OCI-LY7 (cell line): ENCODE measurements at regions of chr5 and their contacts with region 1.

Region 1: GRCh38 chr5:5752844-5753243 is 330.4 kb downstream of the ICE1 start:
- DNase-seq: peak; percentile 68
- H3K4me3 ChIP-seq: peak overlapping the region; percentile 39
- H3K27ac ChIP-seq: peak overlapping the region; percentile 75
- H3K4me1 ChIP-seq: peaks cover 79% of the 10 kb centered on the region
- CTCF ChIP-seq: no peak

Region 2: GRCh38 chr5:5738797-5739489 is 13.9 kb before region 1 on chr5:
- CTCF ChIA-PET with region 1: no interaction called
- POLR2A ChIA-PET with region 1: interaction called, 10 read pairs
- intact Hi-C with region 1: no loop called
- DNase-seq: peak; percentile 17
- H3K4me3 ChIP-seq: no peak overlapping the region
- H3K27ac ChIP-seq: no peak overlapping the region
- H3K4me1 ChIP-seq: peaks cover 30% of the 10 kb centered on the region
- CTCF ChIP-seq: no peak